ENCODE measurements at regions of chr4 and their contacts with region 1.

Region 1: DNA sequence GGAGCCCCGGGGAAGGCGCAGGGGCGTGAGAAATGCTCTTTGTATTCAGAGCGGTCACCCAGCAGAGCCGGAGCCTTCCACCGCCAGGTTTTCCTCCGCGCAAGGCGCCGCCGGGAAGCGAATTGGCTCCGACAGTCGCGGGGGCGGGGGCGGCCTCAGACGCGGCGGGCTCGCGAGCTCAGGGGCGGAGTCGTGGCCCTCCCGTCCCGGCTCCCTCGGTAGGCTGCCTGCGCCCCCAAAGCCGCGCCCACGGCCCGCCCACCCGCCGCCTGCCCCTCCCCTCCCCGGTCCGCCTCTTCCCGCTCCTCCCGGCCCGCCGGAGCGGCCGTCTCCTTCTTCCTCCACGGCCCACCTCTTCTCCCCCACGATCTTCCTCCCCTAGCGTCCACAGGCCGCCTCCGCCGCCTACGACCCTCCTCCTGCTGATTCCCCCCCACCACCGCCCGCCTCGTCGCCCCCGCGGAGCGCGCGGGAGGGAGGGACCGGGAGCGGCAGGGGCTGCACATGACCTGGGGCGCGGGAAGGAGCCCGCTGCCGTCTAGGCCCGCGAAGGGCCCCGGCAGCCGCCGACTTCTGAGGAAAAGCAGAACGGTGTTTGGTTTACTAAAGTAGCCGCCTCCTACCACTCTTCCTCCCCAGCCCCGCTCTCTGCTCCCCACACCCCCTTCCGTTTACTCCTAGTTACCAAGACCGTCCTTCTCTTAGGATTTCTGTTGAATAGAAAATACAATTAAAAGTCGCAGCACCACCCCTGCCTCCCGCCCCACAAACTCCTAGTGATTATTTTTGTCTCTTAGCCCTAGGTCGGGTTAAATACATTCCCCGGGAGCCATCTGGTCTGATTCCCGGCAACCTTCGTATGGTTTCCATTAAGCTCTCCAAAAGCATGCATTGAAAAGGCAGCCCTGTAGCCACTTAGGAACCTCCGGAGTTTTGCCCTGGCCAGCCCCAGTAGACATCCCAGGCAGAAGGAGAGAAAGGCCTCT is 53.2 kb downstream of the C4orf51 start:
- DNase-seq: peak; percentile 97
- ATAC-seq: peak; percentile 97

Region 2: DNA sequence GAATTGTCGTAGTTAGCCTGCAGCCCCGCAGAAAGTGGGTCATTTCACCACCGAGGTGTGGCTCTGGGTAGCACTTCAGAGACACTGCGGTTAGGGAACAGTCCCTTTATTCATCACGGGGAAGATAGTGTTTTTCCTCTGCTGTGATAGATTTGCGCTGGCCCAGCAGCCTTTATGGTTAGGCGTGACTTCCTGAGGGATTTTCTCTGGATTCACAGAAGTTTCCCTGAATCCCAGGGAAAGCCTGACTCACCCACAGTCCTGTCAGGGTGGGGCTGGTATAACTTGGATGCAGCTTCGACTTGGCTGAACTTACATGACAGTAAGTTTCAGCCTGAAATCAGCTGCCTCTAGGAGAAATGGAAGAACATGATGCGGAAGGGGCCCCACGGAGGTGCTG is 1283.6 kb before region 1 on chr4:
- intact Hi-C with region 1: no loop called
- DNase-seq: peak; percentile 46
- ATAC-seq: peak; percentile 77

Region 3: DNA sequence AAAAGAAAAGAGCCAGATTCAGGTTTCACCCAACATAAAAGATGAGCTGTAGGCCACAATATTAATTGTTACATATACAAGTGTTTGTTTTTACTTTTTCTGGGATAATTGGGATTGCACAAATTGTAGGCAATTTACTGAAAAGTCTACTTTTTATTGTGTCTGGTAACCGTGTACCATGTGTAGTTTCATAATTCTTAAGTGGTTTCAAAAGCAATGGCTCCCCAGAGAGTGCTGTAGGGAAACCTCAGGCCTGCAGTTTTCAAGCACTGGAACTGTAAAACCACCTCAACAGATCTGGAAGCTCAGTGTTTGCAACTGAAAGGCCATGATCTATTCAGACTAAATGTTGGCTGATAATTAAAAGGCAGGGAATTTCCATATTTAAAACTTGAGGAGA is 167.9 kb before region 1 on chr4:
- intact Hi-C with region 1: no loop called
- DNase-seq: no peak
- ATAC-seq: no peak

Region 4: GRCh38 chr4:145618932-145619638 is 114.1 kb before region 1 on chr4 and contains the start of gene MMAA:
- intact Hi-C with region 1: loop called (anchors 10 kb)
- DNase-seq: peak; percentile 97
- ATAC-seq: peak; percentile 100
- total RNA-seq, gene MMAA: 8.6 TPM

Region 5: DNA sequence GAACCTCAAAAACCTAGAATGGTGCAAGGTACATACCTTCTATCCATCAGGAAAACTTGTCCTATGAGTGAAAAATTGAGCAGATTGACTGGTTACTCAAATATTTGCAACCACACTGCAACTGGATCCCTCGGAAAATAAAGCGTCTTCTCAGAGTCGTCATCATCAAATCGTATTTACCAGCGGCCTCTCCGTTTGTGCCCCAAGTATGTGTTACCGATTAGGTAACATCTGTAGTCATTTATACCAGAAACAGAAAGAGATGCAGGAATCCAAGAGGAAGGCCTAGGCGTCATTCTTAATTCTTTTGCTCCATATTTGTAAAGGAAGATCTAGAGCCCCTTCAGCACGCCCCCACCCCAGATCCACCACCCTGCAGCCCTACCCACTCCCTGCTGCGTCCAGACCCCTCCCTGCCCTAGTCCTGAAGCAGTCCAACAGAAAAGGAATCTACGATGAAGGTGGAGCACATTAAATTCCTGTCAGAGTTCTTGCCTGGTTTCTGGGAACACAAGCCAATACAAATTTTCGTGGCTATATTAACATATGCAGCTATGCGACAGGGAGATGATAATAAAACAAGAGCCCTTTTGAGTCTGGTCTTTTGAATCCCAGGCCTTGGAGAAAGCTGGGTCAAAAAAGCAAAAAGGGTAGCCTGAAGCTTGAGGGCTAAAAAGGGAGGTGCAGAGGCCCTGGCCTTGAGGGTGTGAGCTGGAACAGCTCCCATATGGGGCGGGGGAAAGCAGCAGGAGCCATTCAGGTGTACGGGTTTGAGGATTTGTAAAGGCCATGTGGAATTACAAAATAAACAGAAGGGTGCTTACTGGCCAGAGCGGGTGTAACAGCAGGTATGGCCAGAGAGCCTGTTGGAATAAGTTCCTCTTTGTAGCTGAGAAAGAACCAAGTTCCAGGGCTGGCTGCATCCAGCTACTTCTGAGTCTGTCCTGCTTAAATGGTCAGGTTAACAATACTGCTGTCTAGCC is 128.4 kb after region 1 on chr4:
- intact Hi-C with region 1: no loop called
- DNase-seq: no peak
- ATAC-seq: no peak

Region 6: GRCh38 chr4:145979160-145979559 is 246.0 kb after region 1 on chr4:
- intact Hi-C with region 1: no loop called
- DNase-seq: no peak
- ATAC-seq: peak; percentile 68

Measured in Right ventricle myocardium superior (tissue), 1 donor.